A549 (cell line): ENCODE measurements at regions of chr11 and their contacts with region 1.

Region 1: DNA sequence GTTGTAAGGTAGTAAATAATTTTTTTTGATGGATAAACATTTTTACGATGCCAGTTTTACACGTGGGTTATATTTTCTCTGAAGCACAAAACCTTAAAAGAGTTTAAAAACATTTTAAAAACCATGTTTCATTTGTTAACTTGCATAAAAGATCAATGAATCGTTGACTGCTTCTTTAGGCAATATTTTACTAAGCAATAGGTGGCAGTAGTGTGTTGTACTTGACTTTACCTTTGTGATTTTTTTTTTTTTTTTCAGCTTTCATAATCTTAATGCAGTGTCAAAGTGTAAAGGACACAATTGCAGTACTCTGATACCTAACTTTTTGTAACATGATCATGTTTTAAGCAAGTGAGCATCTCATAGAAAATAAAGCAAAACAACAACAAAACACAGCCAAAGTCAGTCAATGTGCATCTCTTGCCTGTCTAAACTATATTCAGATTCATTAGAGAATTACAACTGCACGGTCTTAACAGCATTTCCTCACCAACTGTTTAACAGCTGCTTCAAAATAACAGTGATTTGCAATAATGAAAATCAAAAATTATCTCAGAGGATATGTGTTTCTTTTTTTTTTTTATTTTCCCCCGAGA is 27.7 kb downstream of the DNAJC24 start:
- DNase-seq: peak; percentile 5 to 10
- ATAC-seq: peak in 1 of 2 experiments; percentile 52; a peak in 2 of 6 replicates
- H3K4me3 ChIP-seq: no peak overlapping the region
- H3K27ac ChIP-seq: no peak overlapping the region
- H3K4me1 ChIP-seq: no peaks in the 10 kb centered on the region
- CTCF ChIP-seq: peak; percentile 61
- EP300 ChIP-seq: no peak
- POLR2A ChIP-seq: no peak
- RAD21 ChIP-seq: peak; percentile 64 to 68; a peak in 4 of 5 replicates

Region 2: DNA sequence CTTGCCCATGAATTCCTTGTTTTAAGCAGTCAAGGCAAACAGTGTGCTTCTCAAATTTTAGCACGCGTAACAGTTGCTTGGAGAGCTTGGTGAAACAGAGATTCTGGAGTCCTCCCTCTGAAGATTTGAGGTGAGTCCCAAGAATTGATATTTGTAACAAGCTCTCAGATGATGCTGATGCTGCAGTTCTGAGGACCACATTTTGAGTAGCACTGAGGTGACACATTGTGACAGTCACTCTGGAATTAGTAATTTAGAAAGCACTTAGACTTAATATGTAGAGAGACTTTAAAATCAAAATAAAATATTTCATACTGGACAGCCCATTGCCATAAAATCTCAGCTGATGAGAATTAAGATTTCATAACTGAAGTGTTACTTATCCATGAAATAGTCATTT is 10.9 kb after region 1 on chr11:
- CTCF ChIA-PET with region 1: interaction called, 10 read pairs
- POLR2A ChIA-PET with region 1: no interaction called
- DNase-seq: no peak
- ATAC-seq: no peak
- H3K4me3 ChIP-seq: no peak overlapping the region
- H3K27ac ChIP-seq: no peak overlapping the region
- H3K4me1 ChIP-seq: no peaks in the 10 kb centered on the region
- CTCF ChIP-seq: no peak
- EP300 ChIP-seq: no peak
- POLR2A ChIP-seq: no peak
- RAD21 ChIP-seq: no peak